OCI-LY7 (cell line): ENCODE measurements at regions of chr16 and their contacts with region 1.

Region 1: DNA sequence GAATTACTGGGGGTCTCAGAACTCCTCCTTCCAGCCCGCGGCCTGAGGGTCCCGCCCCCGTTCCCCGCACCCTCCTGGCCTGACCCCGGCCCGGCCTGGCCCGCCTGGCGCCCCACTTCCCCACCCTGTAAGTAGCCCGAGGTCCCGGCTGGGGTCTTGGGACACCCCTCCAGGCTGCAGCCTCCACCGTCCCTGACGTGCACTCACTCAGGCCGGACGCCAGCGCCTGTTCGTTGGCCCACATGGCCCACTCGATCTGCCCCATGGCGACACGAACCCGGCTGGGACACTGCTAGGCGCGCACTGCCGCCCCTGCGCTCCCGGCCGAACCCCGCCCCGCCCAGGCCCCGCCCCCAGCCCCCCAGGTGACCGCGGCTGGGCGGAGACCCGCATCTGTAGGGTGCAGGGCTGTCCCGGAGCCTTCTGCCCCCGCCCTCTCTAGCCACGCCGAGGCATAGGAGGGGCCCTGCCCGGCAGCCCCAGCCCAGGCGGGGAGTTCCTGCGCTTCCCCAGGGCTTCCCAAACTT is at the start of gene CYBA:
- DNase-seq: peak; percentile 88
- H3K4me3 ChIP-seq: peak within 1 kb of the TSS; percentile 90
- H3K27ac ChIP-seq: peak within 1 kb of the TSS; percentile 94
- H3K4me1 ChIP-seq: peaks cover 36% of the 10 kb centered on the region
- CTCF ChIP-seq: no peak
- total RNA-seq, gene CYBA: 601 and 647 TPM in 2 replicates

Region 2: GRCh38 chr16:88686439-88687253 is 35.8 kb after region 1 on chr16 and contains the start of gene SNAI3:
- CTCF ChIA-PET with region 1: no interaction called
- POLR2A ChIA-PET with region 1: no interaction called
- intact Hi-C with region 1: loop called (anchors 1 kb)
- DNase-seq: peak; percentile 89
- H3K4me3 ChIP-seq: peak within 1 kb of the TSS; percentile 77
- H3K27ac ChIP-seq: peak within 1 kb of the TSS; percentile 0
- H3K4me1 ChIP-seq: peaks cover 43% of the 10 kb centered on the region
- CTCF ChIP-seq: no peak
- total RNA-seq, gene SNAI3: 2.4 and 3.1 TPM in 2 replicates

Region 3: GRCh38 chr16:88706288-88706964 is 55.6 kb after region 1 on chr16 and contains the starts of genes CTU2 and RNF166:
- CTCF ChIA-PET with region 1: no interaction called
- POLR2A ChIA-PET with region 1: no interaction called
- intact Hi-C with region 1: loop called (anchors 1 kb)
- DNase-seq: peak; percentile 91
- H3K4me3 ChIP-seq: peak within 1 kb of the TSS; percentile 89
- H3K27ac ChIP-seq: peak within 1 kb of the TSS; percentile 71
- H3K4me1 ChIP-seq: peaks cover 53% of the 10 kb centered on the region
- CTCF ChIP-seq: no peak
- total RNA-seq, gene CTU2: 18.5 and 21.9 TPM in 2 replicates
- total RNA-seq, gene RNF166: 39.2 and 52.4 TPM in 2 replicates

Region 4: GRCh38 chr16:88831838-88832237 is 181.0 kb after region 1 on chr16:
- CTCF ChIA-PET with region 1: no interaction called
- POLR2A ChIA-PET with region 1: no interaction called
- intact Hi-C with region 1: no loop called
- DNase-seq: no peak
- H3K4me3 ChIP-seq: no peak overlapping the region
- H3K27ac ChIP-seq: no peak overlapping the region
- H3K4me1 ChIP-seq: no peaks in the 10 kb centered on the region
- CTCF ChIP-seq: no peak

Region 5: GRCh38 chr16:89657442-89658220 is 1006.8 kb after region 1 on chr16 and contains the starts of genes CHMP1A and SPATA33:
- CTCF ChIA-PET with region 1: no interaction called
- POLR2A ChIA-PET with region 1: interaction called, 3 read pairs
- intact Hi-C with region 1: loop called (anchors 5 kb)
- DNase-seq: peak; percentile 94
- H3K4me3 ChIP-seq: peak within 1 kb of the TSS; percentile 98
- H3K27ac ChIP-seq: peak within 1 kb of the TSS; percentile 53
- H3K4me1 ChIP-seq: peaks cover 13% of the 10 kb centered on the region
- CTCF ChIP-seq: no peak
- total RNA-seq, gene CHMP1A: 53.1 and 57.5 TPM in 2 replicates
- total RNA-seq, gene SPATA33: 8.6 and 9.4 TPM in 2 replicates